ENCODE measurements at regions of chr4 and their contacts with region 1.

Region 1: GRCh38 chr4:87270144-87270543 is 49.7 kb upstream of the KLHL8 start:
- ATAC-seq: peak in 5 of 8 experiments; percentile 48 to 92 (median 67)
- H3K4me3 ChIP-seq: no peak overlapping the region
- H3K27ac ChIP-seq: no peak overlapping the region
- H3K4me1 ChIP-seq: peaks cover 0 to 11% of the 10 kb centered on the region in 2 donors

Region 2: DNA sequence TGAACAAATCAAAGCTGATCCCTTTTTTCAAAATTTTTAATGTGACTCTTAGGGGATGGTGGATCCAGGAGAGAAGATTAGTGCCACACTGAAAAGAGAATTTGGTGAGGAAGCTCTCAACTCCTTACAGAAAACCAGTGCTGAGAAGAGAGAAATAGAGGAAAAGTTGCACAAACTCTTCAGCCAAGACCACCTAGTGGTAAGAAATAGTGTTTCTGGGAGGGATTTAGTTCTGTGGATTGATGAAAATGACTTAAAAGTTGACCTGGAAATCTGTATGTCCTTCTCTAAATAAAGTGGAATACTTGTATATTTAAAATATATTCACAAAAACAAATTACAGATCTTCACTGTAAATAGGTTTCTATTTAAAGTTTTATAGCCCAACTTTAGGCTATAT is 181.4 kb after region 1 on chr4:
- in situ Hi-C with region 1: loop called in 3 of 9 experiments (anchors 10 to 25 kb)
- ATAC-seq: no peak
- H3K4me3 ChIP-seq: no peak overlapping the region
- H3K27ac ChIP-seq: no peak overlapping the region
- H3K4me1 ChIP-seq: no peaks in the 10 kb centered on the region